Activated B cell treated with CpG ODN at 0.5 μM for 24 hours (primary cell): ENCODE measurements at regions of chr7 and their contacts with region 1.

Region 1: GRCh38 chr7:32942786-32943653 is 14.2 kb upstream of the FKBP9 start:
- DNase-seq: peak; percentile 72
- ATAC-seq: peak; percentile 81
- H3K4me3 Mint-ChIP-seq: peak overlapping the region; percentile 92
- H3K27ac Mint-ChIP-seq: no peak overlapping the region
- H3K4me1 Mint-ChIP-seq: peaks cover 23% of the 10 kb centered on the region
- H3K27me3 Mint-ChIP-seq: no peaks in the 10 kb centered on the region
- CTCF ChIP-seq: no peak

Region 2: DNA sequence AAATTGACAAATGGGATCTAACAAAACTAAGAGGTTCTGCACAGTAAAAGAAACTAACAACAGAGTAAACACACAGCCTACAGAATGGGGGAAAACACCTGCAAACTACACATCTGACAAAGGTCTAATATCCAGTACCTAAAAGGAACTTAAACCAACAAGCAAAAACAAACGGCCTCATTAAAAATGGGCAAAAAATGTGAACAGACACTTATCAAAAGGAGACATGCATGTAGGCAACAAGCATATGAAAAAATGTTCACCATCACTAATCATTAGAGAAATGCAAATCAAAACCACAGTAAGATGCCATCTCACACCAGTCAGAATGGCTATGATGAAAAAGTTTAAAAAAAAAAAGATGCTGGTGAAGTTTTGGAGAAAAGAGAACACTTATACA is 248.8 kb before region 1 on chr7:
- CTCF ChIA-PET with region 1: interaction called, 3 read pairs
- POLR2A ChIA-PET with region 1: no interaction called
- intact Hi-C with region 1: loop called (anchors 2 kb)
- DNase-seq: no peak
- ATAC-seq: no peak
- H3K4me3 Mint-ChIP-seq: no peak overlapping the region
- H3K27ac Mint-ChIP-seq: no peak overlapping the region
- H3K4me1 Mint-ChIP-seq: peaks cover 15% of the 10 kb centered on the region
- H3K27me3 Mint-ChIP-seq: no peaks in the 10 kb centered on the region
- CTCF ChIP-seq: no peak

Region 3: GRCh38 chr7:32803406-32804141 is 139.4 kb before region 1 on chr7:
- CTCF ChIA-PET with region 1: interaction called, 11 read pairs
- POLR2A ChIA-PET with region 1: no interaction called
- intact Hi-C with region 1: loop called (anchors 1 kb)
- DNase-seq: no peak
- ATAC-seq: no peak
- H3K4me3 Mint-ChIP-seq: no peak overlapping the region
- H3K27ac Mint-ChIP-seq: no peak overlapping the region
- H3K4me1 Mint-ChIP-seq: no peaks in the 10 kb centered on the region
- H3K27me3 Mint-ChIP-seq: no peaks in the 10 kb centered on the region
- CTCF ChIP-seq: no peak

Region 4: GRCh38 chr7:32891800-32892520 is 51.1 kb before region 1 on chr7:
- CTCF ChIA-PET with region 1: interaction called, 12 read pairs
- POLR2A ChIA-PET with region 1: interaction called, 35 read pairs
- intact Hi-C with region 1: loop called (anchors 1 kb)
- DNase-seq: peak; percentile 96
- ATAC-seq: peak; percentile 66
- H3K4me3 Mint-ChIP-seq: peak overlapping the region; percentile 91
- H3K27ac Mint-ChIP-seq: peak overlapping the region; percentile 97
- H3K4me1 Mint-ChIP-seq: peaks cover 56% of the 10 kb centered on the region
- H3K27me3 Mint-ChIP-seq: no peaks in the 10 kb centered on the region
- CTCF ChIP-seq: no peak

Region 5: DNA sequence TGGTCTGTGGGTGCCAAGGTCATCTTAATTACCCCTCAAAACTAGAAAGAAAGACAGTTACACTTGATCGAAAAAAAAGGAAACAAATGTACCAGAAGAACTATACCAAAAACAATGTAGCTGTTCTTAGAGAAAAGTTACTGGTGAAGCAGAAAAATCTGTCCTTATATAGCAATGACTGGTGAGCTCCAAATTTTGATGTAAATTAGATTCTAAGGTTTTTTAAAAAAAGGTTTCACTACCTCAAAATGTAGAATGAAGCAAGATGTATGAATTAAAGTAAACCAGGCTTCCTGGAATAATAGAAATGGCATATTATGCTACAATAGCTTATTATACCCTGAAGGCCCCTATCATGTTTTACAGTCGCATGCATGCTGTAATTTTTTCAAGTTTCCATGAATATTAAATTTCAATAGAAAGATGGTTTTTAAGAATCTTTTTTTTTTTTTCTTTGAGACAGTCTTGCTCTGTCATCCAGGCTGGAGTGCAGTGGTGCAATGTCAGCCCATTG is 14.2 kb before region 1 on chr7:
- CTCF ChIA-PET with region 1: interaction called, 7 read pairs
- POLR2A ChIA-PET with region 1: interaction called, 20 read pairs
- intact Hi-C with region 1: no loop called
- DNase-seq: no peak
- ATAC-seq: peak; percentile 81
- H3K4me3 Mint-ChIP-seq: peak overlapping the region; percentile 30
- H3K27ac Mint-ChIP-seq: peak overlapping the region; percentile 81
- H3K4me1 Mint-ChIP-seq: peaks cover 25% of the 10 kb centered on the region
- H3K27me3 Mint-ChIP-seq: no peaks in the 10 kb centered on the region
- CTCF ChIP-seq: no peak

Region 6: GRCh38 chr7:33062782-33063443 is 119.9 kb after region 1 on chr7:
- CTCF ChIA-PET with region 1: no interaction called
- POLR2A ChIA-PET with region 1: no interaction called
- intact Hi-C with region 1: loop called (anchors 1 kb)
- DNase-seq: peak; percentile 91
- ATAC-seq: peak; percentile 93
- H3K4me3 Mint-ChIP-seq: peak overlapping the region; percentile 91
- H3K27ac Mint-ChIP-seq: peak overlapping the region; percentile 89
- H3K4me1 Mint-ChIP-seq: peaks cover 43% of the 10 kb centered on the region
- H3K27me3 Mint-ChIP-seq: no peaks in the 10 kb centered on the region
- CTCF ChIP-seq: no peak

Region 7: DNA sequence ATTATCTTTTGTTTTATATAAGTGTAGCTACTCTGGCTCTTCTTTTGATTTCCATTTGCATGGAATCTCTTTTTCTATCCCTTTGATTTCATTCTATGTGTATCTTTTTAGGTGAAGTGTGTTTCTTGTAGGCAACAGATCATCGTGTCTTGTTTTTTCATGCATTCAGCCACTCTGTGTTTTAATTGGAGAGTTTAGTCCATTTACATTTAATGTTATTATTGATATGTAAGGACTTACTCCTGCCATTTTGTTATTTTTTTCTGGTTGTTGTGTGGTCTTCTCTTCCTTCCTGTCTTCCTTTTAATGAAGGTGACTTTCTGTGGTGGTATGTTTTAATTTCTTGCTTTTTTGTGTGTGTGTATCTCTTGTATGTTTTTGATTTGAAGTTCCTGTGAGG is 267.9 kb after region 1 on chr7:
- CTCF ChIA-PET with region 1: no interaction called
- POLR2A ChIA-PET with region 1: no interaction called
- intact Hi-C with region 1: no loop called
- DNase-seq: no peak
- ATAC-seq: no peak
- H3K4me3 Mint-ChIP-seq: no peak overlapping the region
- H3K27ac Mint-ChIP-seq: no peak overlapping the region
- H3K4me1 Mint-ChIP-seq: no peaks in the 10 kb centered on the region
- H3K27me3 Mint-ChIP-seq: no peaks in the 10 kb centered on the region
- CTCF ChIP-seq: no peak